ENCODE measurements at regions of chr22 and their contacts with region 1.

Region 1: DNA sequence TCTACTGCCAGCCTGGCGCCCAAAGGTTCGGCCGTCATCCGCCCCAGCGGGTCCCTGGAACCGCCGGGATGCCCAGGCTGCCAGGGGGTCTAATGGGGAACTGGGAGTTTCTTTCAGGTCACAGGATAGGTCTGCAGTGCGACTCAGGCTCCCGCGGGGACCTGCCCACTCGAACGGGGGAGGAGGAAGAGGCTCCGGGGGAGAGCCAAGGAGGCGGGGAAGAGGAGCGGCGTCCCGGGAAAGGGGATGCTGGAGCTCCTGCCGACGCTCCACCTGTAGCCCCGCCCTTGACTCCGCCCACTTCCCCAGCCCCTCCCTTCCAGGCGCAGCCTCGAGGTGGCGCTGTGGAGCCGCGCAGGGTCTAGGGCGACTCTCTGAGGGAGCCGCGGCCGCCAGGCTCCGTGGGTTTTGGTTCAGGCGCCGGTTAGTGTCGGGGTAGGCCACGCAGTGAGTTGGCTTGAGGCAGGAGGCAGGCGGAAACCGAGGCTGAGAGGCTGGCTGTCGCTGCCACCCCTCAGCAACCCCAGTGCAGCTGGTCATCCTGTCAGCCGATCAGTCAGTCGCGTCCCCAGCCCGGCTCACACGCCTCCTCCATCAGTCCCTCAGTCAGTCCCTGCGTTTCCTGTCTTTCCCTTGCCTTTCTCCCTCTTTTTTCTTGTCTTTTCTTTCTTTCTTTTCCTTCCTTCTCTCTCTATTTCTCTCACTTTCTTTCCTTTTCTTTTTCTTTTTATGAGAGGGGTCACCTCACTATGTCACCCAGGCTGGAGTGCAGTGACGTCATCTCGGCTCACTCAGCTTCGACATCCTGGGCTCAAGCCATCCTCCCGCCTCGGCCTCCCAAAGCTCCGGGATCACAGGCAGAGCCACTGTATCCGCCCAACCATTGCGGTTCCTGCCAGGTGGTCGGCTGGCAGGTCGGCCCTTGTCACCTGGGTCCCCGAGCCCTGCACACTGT is 26.4 kb downstream of the YWHAH start:
- DNase-seq: peak; percentile 20
- ATAC-seq: peak; percentile 95
- H3K4me3 ChIP-seq: peak overlapping the region; percentile 76; the same call in 1 of the 2 replicates
- H3K27ac ChIP-seq: no peak overlapping the region
- H3K4me1 ChIP-seq: peaks cover 14% of the 10 kb centered on the region
- H3K27me3 ChIP-seq: no peaks in the 10 kb centered on the region
- CTCF ChIP-seq: peak; percentile 84 to 98 (median 92)
- EP300 ChIP-seq: no peak
- POLR2A ChIP-seq: no peak
- RAD21 ChIP-seq: peak; percentile 67

Region 2: GRCh38 chr22:31841078-31841827 is 129.5 kb before region 1 on chr22:
- CTCF ChIA-PET with region 1: no interaction called
- POLR2A ChIA-PET with region 1: no interaction called
- RAD21 ChIA-PET with region 1: no interaction called
- SMC1A ChIA-PET with region 1: no interaction called
- in situ Hi-C with region 1: no loop called
- intact Hi-C with region 1: no loop called
- DNase-seq: no peak
- ATAC-seq: no peak
- H3K4me3 ChIP-seq: no peak overlapping the region
- H3K27ac ChIP-seq: no peak overlapping the region
- H3K4me1 ChIP-seq: peaks cover 6% of the 10 kb centered on the region
- H3K27me3 ChIP-seq: no peaks in the 10 kb centered on the region
- CTCF ChIP-seq: no peak
- EP300 ChIP-seq: no peak
- POLR2A ChIP-seq: no peak
- RAD21 ChIP-seq: no peak

Region 3: DNA sequence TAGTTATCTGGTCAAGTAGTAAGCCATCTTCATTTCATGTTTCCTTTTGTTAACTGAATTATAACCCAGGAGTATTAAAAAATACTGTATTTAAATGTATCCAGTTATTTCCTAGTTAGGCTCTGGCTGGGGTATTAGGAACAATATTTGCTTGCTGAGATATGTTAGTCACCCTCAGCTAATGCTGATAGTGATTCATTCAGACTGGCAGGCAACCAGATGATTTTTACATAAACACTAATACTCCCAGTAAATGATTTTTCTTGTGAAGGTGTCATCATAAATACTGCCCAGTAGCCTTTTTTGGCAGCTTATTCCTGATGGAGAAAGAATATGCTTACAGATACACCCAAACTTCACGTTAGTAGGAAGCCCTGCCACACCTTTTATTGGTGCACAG is 18.3 kb before region 1 on chr22:
- CTCF ChIA-PET with region 1: interaction called, 25 read pairs
- POLR2A ChIA-PET with region 1: no interaction called
- RAD21 ChIA-PET with region 1: interaction called, 7 read pairs
- SMC1A ChIA-PET with region 1: interaction called, 5 read pairs
- in situ Hi-C with region 1: no loop called
- intact Hi-C with region 1: no loop called
- DNase-seq: no peak
- ATAC-seq: no peak
- H3K4me3 ChIP-seq: no peak overlapping the region
- H3K27ac ChIP-seq: no peak overlapping the region
- H3K4me1 ChIP-seq: peaks cover 4% of the 10 kb centered on the region; the same call in 1 of the 2 replicates
- H3K27me3 ChIP-seq: no peaks in the 10 kb centered on the region
- CTCF ChIP-seq: no peak
- EP300 ChIP-seq: no peak
- POLR2A ChIP-seq: no peak
- RAD21 ChIP-seq: no peak

Region 4: GRCh38 chr22:31960767-31961166 is 10.0 kb before region 1 on chr22:
- CTCF ChIA-PET with region 1: interaction called, 12 read pairs
- POLR2A ChIA-PET with region 1: no interaction called
- RAD21 ChIA-PET with region 1: interaction called, 4 read pairs
- SMC1A ChIA-PET with region 1: interaction called, 3 read pairs
- in situ Hi-C with region 1: no loop called
- intact Hi-C with region 1: no loop called
- DNase-seq: no peak
- ATAC-seq: no peak
- H3K4me3 ChIP-seq: no peak overlapping the region
- H3K27ac ChIP-seq: no peak overlapping the region
- H3K4me1 ChIP-seq: no peaks in the 10 kb centered on the region
- H3K27me3 ChIP-seq: no peaks in the 10 kb centered on the region
- CTCF ChIP-seq: no peak
- EP300 ChIP-seq: no peak
- POLR2A ChIP-seq: no peak
- RAD21 ChIP-seq: no peak

Region 5: GRCh38 chr22:32020117-32020516 is 49.4 kb after region 1 on chr22:
- CTCF ChIA-PET with region 1: no interaction called
- POLR2A ChIA-PET with region 1: no interaction called
- RAD21 ChIA-PET with region 1: no interaction called
- SMC1A ChIA-PET with region 1: no interaction called
- in situ Hi-C with region 1: no loop called
- intact Hi-C with region 1: no loop called
- DNase-seq: no peak
- ATAC-seq: no peak
- H3K4me3 ChIP-seq: no peak overlapping the region
- H3K27ac ChIP-seq: no peak overlapping the region
- H3K4me1 ChIP-seq: no peaks in the 10 kb centered on the region
- H3K27me3 ChIP-seq: no peaks in the 10 kb centered on the region
- CTCF ChIP-seq: no peak
- EP300 ChIP-seq: no peak
- POLR2A ChIP-seq: no peak
- RAD21 ChIP-seq: no peak

Region 6: DNA sequence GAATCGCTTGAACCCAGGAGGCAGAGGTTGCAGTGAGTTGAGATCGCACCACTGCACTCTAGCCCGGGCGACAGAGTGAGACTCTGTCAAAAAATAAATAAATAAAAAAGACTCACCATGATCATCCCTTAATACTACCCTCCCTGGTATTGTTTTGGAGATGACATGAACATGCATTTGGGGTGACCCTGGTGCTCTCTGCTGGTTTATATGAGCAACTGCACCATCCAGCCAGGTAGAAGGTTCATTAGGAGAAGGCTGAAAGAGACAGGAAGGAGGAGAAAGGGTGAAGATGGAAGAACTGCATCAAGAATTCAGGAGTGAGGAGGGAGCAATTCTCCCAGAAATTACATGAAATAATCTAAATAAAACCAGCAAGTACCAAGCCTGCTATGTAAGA is 110.1 kb after region 1 on chr22:
- CTCF ChIA-PET with region 1: interaction called, 128 read pairs
- POLR2A ChIA-PET with region 1: no interaction called
- RAD21 ChIA-PET with region 1: no interaction called
- SMC1A ChIA-PET with region 1: interaction called, 6 read pairs
- in situ Hi-C with region 1: loop called (anchors 5 kb)
- intact Hi-C with region 1: no loop called
- DNase-seq: peak; percentile 7
- ATAC-seq: peak; percentile 84
- H3K4me3 ChIP-seq: no peak overlapping the region
- H3K27ac ChIP-seq: no peak overlapping the region
- H3K4me1 ChIP-seq: no peaks in the 10 kb centered on the region
- H3K27me3 ChIP-seq: no peaks in the 10 kb centered on the region; a peak in 1 of 4 replicates
- CTCF ChIP-seq: peak; percentile 70 to 79 (median 73)
- EP300 ChIP-seq: no peak
- POLR2A ChIP-seq: no peak
- RAD21 ChIP-seq: peak; percentile 83

Measured in GM12878 (cell line).